ENCODE measurements at regions of chr17 and their contacts with region 1.

Region 1: GRCh38 chr17:41548844-41549595 is 20.9 kb upstream of the KRT19 start:
- DNase-seq: no peak
- H3K4me3 ChIP-seq: no peak overlapping the region
- H3K27me3 ChIP-seq: no peaks in the 10 kb centered on the region
- CTCF ChIP-seq: peak; percentile 86

Region 2: GRCh38 chr17:40854159-40854814 is 694.7 kb before region 1 on chr17:
- CTCF ChIA-PET with region 1: interaction called, 84 read pairs
- POLR2A ChIA-PET with region 1: no interaction called
- DNase-seq: peak; percentile 87
- H3K4me3 ChIP-seq: no peak overlapping the region
- H3K27me3 ChIP-seq: no peaks in the 10 kb centered on the region
- CTCF ChIP-seq: no peak

Region 3: GRCh38 chr17:41329281-41329948 is 219.6 kb before region 1 on chr17:
- CTCF ChIA-PET with region 1: interaction called, 20 read pairs
- POLR2A ChIA-PET with region 1: no interaction called
- DNase-seq: no peak
- H3K4me3 ChIP-seq: no peak overlapping the region
- H3K27me3 ChIP-seq: no peaks in the 10 kb centered on the region
- CTCF ChIP-seq: peak; percentile 92

Region 4: GRCh38 chr17:41496820-41497408 is 52.1 kb before region 1 on chr17:
- CTCF ChIA-PET with region 1: interaction called, 29 read pairs
- POLR2A ChIA-PET with region 1: no interaction called
- DNase-seq: peak; percentile 51
- H3K4me3 ChIP-seq: no peak overlapping the region
- H3K27me3 ChIP-seq: no peaks in the 10 kb centered on the region
- CTCF ChIP-seq: peak; percentile 91

Region 5: DNA sequence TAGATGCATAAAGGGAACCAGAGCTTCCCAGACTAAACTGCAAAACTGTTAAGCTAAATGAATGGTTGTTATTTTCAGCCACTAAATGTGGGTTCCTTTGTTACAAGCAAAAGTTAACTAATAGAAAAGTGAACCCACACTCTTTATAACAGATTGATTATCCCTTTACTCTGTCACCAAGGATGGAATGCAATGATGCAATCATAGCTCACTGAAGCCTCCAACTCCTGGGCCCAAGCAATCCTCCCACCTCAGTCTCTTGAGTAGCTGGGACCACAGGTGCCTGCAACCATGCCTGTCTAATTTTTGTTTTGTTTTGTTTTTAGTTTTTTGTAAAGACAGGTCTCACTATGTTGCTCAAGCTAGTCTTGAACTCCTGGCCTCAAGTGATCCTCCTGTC is 16.3 kb after region 1 on chr17:
- CTCF ChIA-PET with region 1: interaction called, 31 read pairs
- POLR2A ChIA-PET with region 1: no interaction called
- DNase-seq: no peak
- H3K4me3 ChIP-seq: no peak overlapping the region
- H3K27me3 ChIP-seq: peaks cover 15% of the 10 kb centered on the region
- CTCF ChIP-seq: no peak

Region 6: GRCh38 chr17:41665566-41666236 is 116.7 kb after region 1 on chr17:
- CTCF ChIA-PET with region 1: interaction called, 243 read pairs
- POLR2A ChIA-PET with region 1: interaction called, 4 read pairs
- DNase-seq: no peak
- H3K4me3 ChIP-seq: peak overlapping the region; percentile 38
- H3K27me3 ChIP-seq: no peaks in the 10 kb centered on the region
- CTCF ChIP-seq: peak; percentile 80

Region 7: DNA sequence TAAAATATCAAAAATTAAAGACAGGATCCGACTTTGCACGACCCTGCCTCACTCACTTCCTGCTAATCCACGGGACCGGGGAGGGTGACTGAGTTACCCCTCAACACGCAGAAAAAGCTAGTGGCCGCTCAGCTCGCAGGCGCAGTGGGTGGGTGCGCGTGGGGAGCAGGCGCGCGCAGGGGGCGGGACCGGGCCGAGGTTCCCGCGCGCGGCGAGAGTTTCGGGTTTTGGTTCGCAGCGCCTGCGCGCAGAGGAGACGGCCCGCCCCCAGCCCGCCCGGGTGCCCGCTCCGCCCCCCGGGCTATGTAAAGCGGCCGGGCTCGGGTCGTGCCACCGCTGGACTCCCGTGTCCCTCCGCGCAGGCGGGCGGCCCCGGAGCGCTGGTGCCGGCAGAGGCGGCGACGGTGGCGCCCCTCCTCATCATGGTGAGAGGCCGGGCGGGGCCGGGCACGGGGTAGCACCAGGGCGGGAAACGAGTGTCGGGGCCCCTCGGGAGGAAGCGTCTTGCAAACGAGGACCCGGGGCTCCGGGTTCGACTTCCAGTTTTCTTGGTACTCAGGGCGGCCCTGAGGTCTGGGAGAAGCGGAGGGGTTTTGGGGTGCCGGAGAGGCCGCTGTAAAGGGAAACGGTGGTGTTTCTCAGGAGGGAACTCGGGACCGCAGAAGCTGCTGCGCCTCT is 417.6 kb after region 1 on chr17 and contains the start of gene CNP:
- CTCF ChIA-PET with region 1: no interaction called
- POLR2A ChIA-PET with region 1: no interaction called
- DNase-seq: no peak
- H3K4me3 ChIP-seq: peak within 1 kb of the TSS; percentile 92
- H3K27me3 ChIP-seq: no peaks in the 10 kb centered on the region
- CTCF ChIP-seq: no peak
- polyA plus RNA-seq, gene CNP: 53.5 and 66.2 TPM in 2 replicates

Measured in BJ (cell line).